Activated CD4-positive, alpha-beta memory T cell treated with anti-CD3 and anti-CD28 coated beads, Interleukin-2, amount 10 ng/mL, durations not matched to agents 7 days and 5 days (primary cell): ENCODE measurements at regions of chr6 and their contacts with region 1.

Region 1: DNA sequence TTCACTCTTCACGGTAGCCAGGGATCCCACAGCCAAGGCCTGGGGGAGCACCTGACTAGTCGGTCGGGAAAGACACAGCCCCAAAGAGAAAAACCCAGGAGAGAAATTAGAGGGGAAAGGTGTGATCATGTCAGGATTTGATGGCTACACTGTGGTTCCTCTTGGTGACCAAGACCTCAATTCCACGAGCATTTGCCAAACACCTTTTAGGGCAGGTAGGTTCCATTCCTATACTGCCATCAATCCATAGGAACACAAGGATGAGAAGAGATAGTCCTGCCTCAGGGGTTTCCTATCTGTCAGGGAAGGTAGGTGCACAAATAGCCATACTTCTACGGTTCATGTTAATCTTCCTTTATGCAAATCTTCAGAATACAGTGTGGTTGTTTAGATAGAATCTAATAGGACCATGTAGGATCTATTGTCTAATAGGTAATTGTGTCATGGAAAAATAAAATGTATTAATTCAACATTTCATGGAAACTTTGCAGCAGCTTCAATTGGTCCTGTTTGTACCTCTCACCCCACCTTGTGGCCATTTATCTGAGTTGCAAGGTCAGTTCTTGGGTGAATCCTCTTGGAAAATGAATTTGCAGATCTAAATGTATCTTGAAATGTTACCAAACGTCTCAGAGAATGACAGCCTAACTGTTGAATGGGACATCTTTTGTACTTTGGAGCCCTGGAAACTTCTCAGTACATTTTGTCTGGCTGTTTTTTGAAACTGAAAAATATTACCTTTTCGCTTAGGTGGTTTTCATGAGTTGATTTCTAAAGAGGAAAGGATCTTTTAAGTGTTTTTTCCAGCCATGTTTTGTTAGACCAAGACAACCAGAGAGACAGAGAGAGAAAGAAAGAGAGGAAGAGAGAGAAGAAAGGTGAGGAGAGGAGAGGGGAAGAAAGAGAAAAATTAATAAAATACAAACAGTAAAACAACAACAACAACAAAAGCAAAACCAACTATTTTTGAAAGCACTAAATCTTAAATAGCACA is 33.7 kb upstream of the IYD start:
- DNase-seq: peak; percentile 32
- H3K4me3 Mint-ChIP-seq: no peak overlapping the region
- H3K27ac Mint-ChIP-seq: no peak overlapping the region
- H3K4me1 Mint-ChIP-seq: no peaks in the 10 kb centered on the region
- H3K27me3 Mint-ChIP-seq: peaks cover 4% of the 10 kb centered on the region

Region 2: DNA sequence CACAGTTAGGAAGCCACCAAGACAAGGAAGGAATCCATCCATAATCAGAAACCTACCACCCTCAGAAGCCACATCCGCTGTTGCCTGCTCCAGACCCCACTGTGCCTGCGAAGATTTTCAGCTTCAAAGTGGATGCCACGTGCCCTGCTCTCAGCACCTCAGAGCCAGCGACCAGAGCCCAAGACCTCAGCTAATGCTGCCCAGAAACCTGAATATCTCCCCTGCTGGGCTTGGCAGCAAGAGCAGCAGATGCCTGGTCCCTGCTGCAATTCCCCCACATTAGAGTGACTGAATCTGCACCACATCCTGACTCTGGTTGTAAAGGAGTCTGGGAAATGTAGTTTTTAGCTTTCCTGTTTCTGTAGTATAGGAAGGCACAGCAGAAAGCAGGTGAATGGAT is 255.5 kb before region 1 on chr6:
- CTCF ChIA-PET with region 1: interaction called, 10 read pairs
- POLR2A ChIA-PET with region 1: interaction called, 4 read pairs
- DNase-seq: peak; percentile 57
- H3K4me3 Mint-ChIP-seq: no peak overlapping the region
- H3K27ac Mint-ChIP-seq: peak overlapping the region; percentile 43
- H3K4me1 Mint-ChIP-seq: peaks cover 34% of the 10 kb centered on the region
- H3K27me3 Mint-ChIP-seq: peaks cover 35% of the 10 kb centered on the region